IMR-90 (cell line): ENCODE measurements at regions of chr1 and their contacts with region 1.

Region 1: DNA sequence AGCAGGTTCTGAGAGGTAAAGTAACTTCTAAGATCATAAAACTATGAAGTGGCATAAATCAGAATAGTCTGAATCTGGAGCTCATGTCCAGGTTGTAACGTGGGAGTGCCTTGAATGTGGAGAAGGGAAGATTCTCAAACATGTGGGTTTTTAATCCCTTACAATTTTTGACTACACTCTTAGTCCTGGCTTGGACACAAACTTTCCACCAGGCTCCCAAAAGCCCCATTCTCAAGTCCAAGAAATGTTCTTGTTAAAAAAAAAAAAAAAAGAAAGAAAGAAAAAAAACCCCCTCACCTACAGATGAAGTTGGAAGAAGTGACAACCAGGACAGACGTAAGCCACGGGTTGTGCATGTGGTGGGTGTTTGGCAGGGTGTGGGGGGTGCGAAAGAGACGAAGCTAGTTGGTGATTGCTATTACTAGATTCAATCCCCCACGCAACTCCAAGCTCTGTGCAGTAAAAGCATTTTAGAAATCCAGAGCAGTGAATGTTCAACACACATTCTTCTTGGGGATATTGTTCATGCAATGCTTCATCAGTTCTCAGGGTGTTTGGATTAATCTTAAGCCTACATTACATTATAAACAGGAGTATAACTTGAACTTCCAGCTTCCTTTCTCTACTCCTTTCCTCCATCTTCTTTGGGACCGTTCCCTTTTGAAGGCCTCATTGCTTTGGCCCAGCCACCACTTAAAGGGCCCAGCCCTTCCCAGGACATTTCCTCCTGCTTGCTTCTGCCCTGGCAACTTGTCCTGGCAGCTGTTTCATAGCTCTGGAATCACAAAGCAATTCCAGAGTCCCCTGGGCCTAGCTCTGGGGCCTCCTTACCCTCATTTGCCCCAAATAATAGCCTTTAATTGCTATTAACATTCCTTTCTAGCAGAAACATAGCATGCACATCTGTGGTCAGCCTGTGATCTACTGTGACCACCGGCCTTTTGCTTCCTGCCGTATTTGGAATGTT is 41.8 kb downstream of the PHC2 start:
- DNase-seq: peak; percentile 58
- ATAC-seq: peak; percentile 44
- H3K4me3 ChIP-seq: no peak overlapping the region
- H3K27ac ChIP-seq: peak overlapping the region; percentile 84
- H3K4me1 ChIP-seq: peaks cover 64% of the 10 kb centered on the region
- H3K27me3 ChIP-seq: no peaks in the 10 kb centered on the region
- CTCF ChIP-seq: no peak
- POLR2A ChIP-seq: no peak
- RAD21 ChIP-seq: no peak

Region 2: GRCh38 chr1:33022650-33023200 is 366.4 kb before region 1 on chr1:
- CTCF ChIA-PET with region 1: no interaction called
- POLR2A ChIA-PET with region 1: no interaction called
- dilution Hi-C with region 1: no loop called
- in situ Hi-C with region 1: no loop called
- intact Hi-C with region 1: no loop called
- DNase-seq: no peak
- ATAC-seq: no peak
- H3K4me3 ChIP-seq: no peak overlapping the region
- H3K27ac ChIP-seq: no peak overlapping the region
- H3K4me1 ChIP-seq: no peaks in the 10 kb centered on the region
- H3K27me3 ChIP-seq: no peaks in the 10 kb centered on the region
- CTCF ChIP-seq: no peak
- POLR2A ChIP-seq: no peak
- RAD21 ChIP-seq: no peak

Region 3: GRCh38 chr1:33430692-33431593 is 41.9 kb after region 1 on chr1 and contains the start of gene PHC2:
- CTCF ChIA-PET with region 1: no interaction called
- POLR2A ChIA-PET with region 1: no interaction called
- dilution Hi-C with region 1: no loop called
- in situ Hi-C with region 1: loop called (anchors 5 kb)
- intact Hi-C with region 1: loop called (anchors 1 kb)
- DNase-seq: peak; percentile 94
- ATAC-seq: peak; percentile 90
- H3K4me3 ChIP-seq: peak within 1 kb of the TSS; percentile 87
- H3K27ac ChIP-seq: peak within 1 kb of the TSS; percentile 54
- H3K4me1 ChIP-seq: peaks cover 13% of the 10 kb centered on the region
- H3K27me3 ChIP-seq: no peaks in the 10 kb centered on the region
- CTCF ChIP-seq: peak; percentile 45
- POLR2A ChIP-seq: no peak; the same call in 1 of the 2 replicates
- RAD21 ChIP-seq: no peak
- total RNA-seq, gene PHC2: 43.3 and 46.4 TPM in 2 replicates

Region 4: GRCh38 chr1:33586111-33586510 is 197.0 kb after region 1 on chr1:
- CTCF ChIA-PET with region 1: no interaction called
- POLR2A ChIA-PET with region 1: no interaction called
- dilution Hi-C with region 1: no loop called
- in situ Hi-C with region 1: no loop called
- intact Hi-C with region 1: no loop called
- DNase-seq: peak; percentile 11
- ATAC-seq: peak; percentile 17; the same call in 1 of the 2 replicates
- H3K4me3 ChIP-seq: no peak overlapping the region
- H3K27ac ChIP-seq: no peak overlapping the region
- H3K4me1 ChIP-seq: no peaks in the 10 kb centered on the region
- H3K27me3 ChIP-seq: no peaks in the 10 kb centered on the region; the same call in 1 of the 2 replicates
- CTCF ChIP-seq: no peak
- POLR2A ChIP-seq: no peak
- RAD21 ChIP-seq: no peak